Activated CD4-positive, alpha-beta T cell treated with anti-CD3 and anti-CD28 coated beads for 36 hours (primary cell): ENCODE measurements at regions of chr4 and their contacts with region 1.

Region 1: GRCh38 chr4:153940916-153941315 is 152.0 kb upstream of the SFRP2 start:
- DNase-seq: no peak
- ATAC-seq: no peak
- H3K4me3 Mint-ChIP-seq: no peak overlapping the region
- H3K27ac Mint-ChIP-seq: no peak overlapping the region
- H3K4me1 Mint-ChIP-seq: peaks cover 15% of the 10 kb centered on the region
- H3K27me3 Mint-ChIP-seq: peaks cover 41% of the 10 kb centered on the region

Region 2: GRCh38 chr4:153611679-153612078 is 329.2 kb before region 1 on chr4:
- CTCF ChIA-PET with region 1: no interaction called
- POLR2A ChIA-PET with region 1: no interaction called
- intact Hi-C with region 1: no loop called
- DNase-seq: no peak
- ATAC-seq: no peak
- H3K4me3 Mint-ChIP-seq: no peak overlapping the region
- H3K27ac Mint-ChIP-seq: peak overlapping the region; percentile 17
- H3K4me1 Mint-ChIP-seq: peaks cover 33% of the 10 kb centered on the region
- H3K27me3 Mint-ChIP-seq: no peaks in the 10 kb centered on the region

Region 3: DNA sequence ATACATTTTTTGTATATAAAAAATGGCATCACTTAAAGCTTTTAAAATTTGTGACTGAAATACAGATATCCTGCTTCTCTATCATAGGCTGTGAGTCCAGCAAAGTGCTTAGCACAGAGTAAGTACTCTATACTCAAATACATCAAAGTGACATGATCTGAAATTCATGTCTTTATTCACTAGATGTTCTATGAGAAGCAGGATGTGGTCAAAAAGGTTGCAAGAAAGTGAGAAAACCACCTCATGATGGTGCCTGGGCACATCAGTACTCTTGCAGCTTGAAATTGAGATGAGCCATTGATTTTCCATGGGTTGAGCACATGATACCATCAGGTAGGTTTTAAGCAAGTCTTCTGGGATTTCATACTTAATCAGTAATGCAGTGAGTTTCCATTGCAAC is 131.6 kb before region 1 on chr4:
- CTCF ChIA-PET with region 1: no interaction called
- POLR2A ChIA-PET with region 1: no interaction called
- intact Hi-C with region 1: loop called in 1 of 2 experiments (anchors 5 kb)
- DNase-seq: peak; percentile 55
- ATAC-seq: peak; percentile 96
- H3K4me3 Mint-ChIP-seq: no peak overlapping the region
- H3K27ac Mint-ChIP-seq: peak overlapping the region; percentile 16
- H3K4me1 Mint-ChIP-seq: peaks cover 19% of the 10 kb centered on the region
- H3K27me3 Mint-ChIP-seq: peaks cover 4% of the 10 kb centered on the region

Region 4: GRCh38 chr4:154491341-154492271 is 550.7 kb after region 1 on chr4 and contains the start of gene DCHS2:
- CTCF ChIA-PET with region 1: no interaction called
- POLR2A ChIA-PET with region 1: no interaction called
- intact Hi-C with region 1: loop called in 1 of 2 experiments (anchors 10 kb)
- DNase-seq: peak; percentile 55
- ATAC-seq: peak; percentile 71
- H3K4me3 Mint-ChIP-seq: peak within 1 kb of the TSS; percentile 67
- H3K27ac Mint-ChIP-seq: no peak within 1 kb of the TSS
- H3K4me1 Mint-ChIP-seq: peaks cover 18% of the 10 kb centered on the region
- H3K27me3 Mint-ChIP-seq: peaks cover 55% of the 10 kb centered on the region
- total RNA-seq, gene DCHS2: 0.05 to 0.14 TPM

Region 5: GRCh38 chr4:154757713-154758112 is 816.8 kb after region 1 on chr4:
- CTCF ChIA-PET with region 1: no interaction called
- POLR2A ChIA-PET with region 1: no interaction called
- intact Hi-C with region 1: no loop called
- DNase-seq: no peak
- ATAC-seq: no peak
- H3K4me3 Mint-ChIP-seq: no peak overlapping the region
- H3K27ac Mint-ChIP-seq: no peak overlapping the region
- H3K4me1 Mint-ChIP-seq: no peaks in the 10 kb centered on the region
- H3K27me3 Mint-ChIP-seq: peaks cover 3% of the 10 kb centered on the region